Heart left ventricle (tissue), 16 donors: ENCODE measurements at regions of chr20 and their contacts with region 1.

Region 1: GRCh38 chr20:40880063-40880728 is 148.4 kb upstream of the TOP1 start:
- DNase-seq: no peak
- ATAC-seq: no peak
- H3K4me3 ChIP-seq: no peak overlapping the region
- H3K27ac ChIP-seq: no peak overlapping the region
- H3K4me1 ChIP-seq: peaks cover 0 to 16% (median 0%) of the 10 kb centered on the region in 12 donors
- H3K27me3 ChIP-seq: no peaks in the 10 kb centered on the region
- CTCF ChIP-seq: no peak
- POLR2A ChIP-seq: no peak

Region 2: DNA sequence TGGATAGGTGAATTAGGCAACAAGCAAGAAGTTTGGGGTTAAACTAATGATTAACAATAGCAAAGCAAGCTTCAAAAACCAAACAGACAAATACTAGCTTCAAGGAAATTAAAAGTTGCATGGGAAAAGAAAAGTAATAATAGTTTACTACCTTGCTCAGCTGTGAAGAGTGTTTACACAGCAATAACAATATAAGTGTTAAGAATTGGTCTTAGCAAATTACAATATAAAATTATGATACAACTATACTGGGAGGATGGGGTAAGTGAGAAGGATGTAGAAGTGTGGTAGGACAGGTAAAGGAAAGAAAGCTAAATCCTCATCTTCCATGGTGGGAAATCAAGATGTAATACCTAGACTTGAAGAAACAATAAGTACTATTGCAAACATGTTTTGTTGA is 53.5 kb before region 1 on chr20:
- intact Hi-C with region 1: loop called in 1 of 10 experiments (anchors 5 kb)
- DNase-seq: no peak
- ATAC-seq: no peak
- H3K4me3 ChIP-seq: no peak overlapping the region
- H3K27ac ChIP-seq: no peak overlapping the region
- H3K4me1 ChIP-seq: no peaks in the 10 kb centered on the region
- H3K27me3 ChIP-seq: peaks cover 0 to 4% (median 0%) of the 10 kb centered on the region in 9 donors
- CTCF ChIP-seq: no peak
- POLR2A ChIP-seq: no peak

Region 3: GRCh38 chr20:40896814-40897700 is 16.9 kb after region 1 on chr20:
- intact Hi-C with region 1: no loop called
- DNase-seq: no peak
- ATAC-seq: no peak
- H3K4me3 ChIP-seq: no peak overlapping the region
- H3K27ac ChIP-seq: no peak overlapping the region
- H3K4me1 ChIP-seq: peaks cover 0 to 14% (median 0%) of the 10 kb centered on the region in 12 donors
- H3K27me3 ChIP-seq: peaks cover 0 to 11% (median 0%) of the 10 kb centered on the region in 9 donors
- CTCF ChIP-seq: no peak
- POLR2A ChIP-seq: no peak